Prostate gland (tissue), 2 donors: ENCODE measurements at regions of chr1 and their contacts with region 1.

Region 1: GRCh38 chr1:48202030-48202752 is 20.3 kb upstream of the SLC5A9 start:
- DNase-seq: peak; percentile 59
- H3K4me3 ChIP-seq: no peak overlapping the region
- H3K27ac ChIP-seq: no peak overlapping the region
- H3K4me1 ChIP-seq: no peaks in the 10 kb centered on the region
- H3K27me3 ChIP-seq: no peaks in the 10 kb centered on the region
- CTCF ChIP-seq: peak; percentile 64 to 86 (median 80)
- POLR2A ChIP-seq: no peak

Region 2: DNA sequence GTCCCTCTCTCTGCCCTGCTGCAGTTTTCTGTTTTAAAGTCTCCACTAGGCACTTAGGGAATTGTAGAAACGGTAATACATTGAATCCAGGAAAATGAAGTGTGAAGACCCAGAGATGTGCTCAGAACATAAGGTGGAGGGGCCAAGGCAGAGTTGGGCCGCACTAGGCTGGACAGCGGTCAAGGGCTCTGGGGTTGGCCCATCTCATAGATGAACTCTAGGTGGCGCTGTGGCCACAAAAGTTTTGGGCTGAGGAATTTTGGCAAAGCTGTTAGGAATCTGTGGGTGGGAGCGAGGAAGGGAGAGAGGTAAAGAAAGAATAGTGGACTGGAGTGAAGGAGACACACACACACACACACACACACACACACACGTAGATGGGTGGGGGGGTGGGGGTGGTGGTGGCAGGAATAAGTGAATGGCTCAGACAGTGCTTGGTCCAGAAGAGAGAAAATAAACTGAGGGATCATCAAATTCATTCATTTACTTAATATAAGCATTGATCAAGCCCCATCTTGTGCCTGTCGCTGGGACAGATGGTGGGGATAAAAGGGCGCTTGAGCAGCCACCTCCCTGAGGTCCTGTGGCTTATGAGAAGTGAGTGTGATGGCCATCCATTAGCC is 463.5 kb before region 1 on chr1:
- intact Hi-C with region 1: loop called (anchors 2 kb)
- DNase-seq: peak; percentile 53
- H3K4me3 ChIP-seq: no peak overlapping the region
- H3K27ac ChIP-seq: no peak overlapping the region
- H3K4me1 ChIP-seq: no peaks in the 10 kb centered on the region
- H3K27me3 ChIP-seq: no peaks in the 10 kb centered on the region
- CTCF ChIP-seq: peak in 3 of 4 experiments; percentile 70 to 88 (median 72)
- POLR2A ChIP-seq: no peak

Region 3: GRCh38 chr1:48109390-48110013 is 92.7 kb before region 1 on chr1:
- intact Hi-C with region 1: loop called (anchors 2 kb)
- DNase-seq: peak; percentile 37
- H3K4me3 ChIP-seq: no peak overlapping the region
- H3K27ac ChIP-seq: no peak overlapping the region
- H3K4me1 ChIP-seq: no peaks in the 10 kb centered on the region
- H3K27me3 ChIP-seq: no peaks in the 10 kb centered on the region
- CTCF ChIP-seq: peak; percentile 18 to 80 (median 76)
- POLR2A ChIP-seq: no peak